ENCODE measurements at regions of chr1 and their contacts with region 1.

Region 1: GRCh38 chr1:55284852-55285251 is 69.7 kb upstream of the USP24 start:
- DNase-seq: no peak
- ATAC-seq: peak; percentile 72 to 86 (median 76)
- H3K4me3 ChIP-seq: no peak overlapping the region
- H3K27ac ChIP-seq: no peak overlapping the region
- H3K4me1 ChIP-seq: no peaks in the 10 kb centered on the region
- H3K27me3 ChIP-seq: no peaks in the 10 kb centered on the region
- CTCF ChIP-seq: peak; percentile 55 to 62 (median 62)
- POLR2A ChIP-seq: no peak

Region 2: DNA sequence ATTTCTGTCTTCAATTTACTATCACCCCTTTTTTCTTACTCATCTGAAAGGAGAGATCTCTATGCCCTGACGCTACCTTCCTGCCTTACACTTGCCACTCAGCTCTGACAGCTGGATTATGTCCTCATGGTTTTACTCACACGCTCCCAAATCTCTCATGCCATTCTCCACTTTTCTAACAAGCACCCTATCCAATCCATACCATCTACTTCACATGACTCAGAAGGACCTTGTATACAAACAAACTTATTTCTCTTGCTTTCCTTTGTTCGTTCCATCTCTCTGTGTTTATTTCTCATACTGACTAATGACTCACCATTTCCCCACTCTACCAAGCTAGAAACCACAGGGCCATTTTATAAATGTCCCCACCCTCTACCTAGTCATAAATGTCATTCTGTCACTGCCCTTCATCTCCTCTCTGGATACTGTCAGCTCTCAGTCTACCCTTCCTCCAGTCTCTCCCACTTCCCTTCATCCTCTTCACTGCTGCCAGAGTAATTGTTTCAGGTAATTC is 157.0 kb before region 1 on chr1:
- intact Hi-C with region 1: no loop called
- DNase-seq: no peak
- ATAC-seq: peak; percentile 12 to 27 (median 16)
- H3K4me3 ChIP-seq: no peak overlapping the region
- H3K27ac ChIP-seq: peak overlapping the region in 1 of 3 donors; percentile 31
- H3K4me1 ChIP-seq: peaks cover 0 to 22% (median 3%) of the 10 kb centered on the region in 4 donors
- H3K27me3 ChIP-seq: no peaks in the 10 kb centered on the region
- CTCF ChIP-seq: no peak
- POLR2A ChIP-seq: no peak

Region 3: DNA sequence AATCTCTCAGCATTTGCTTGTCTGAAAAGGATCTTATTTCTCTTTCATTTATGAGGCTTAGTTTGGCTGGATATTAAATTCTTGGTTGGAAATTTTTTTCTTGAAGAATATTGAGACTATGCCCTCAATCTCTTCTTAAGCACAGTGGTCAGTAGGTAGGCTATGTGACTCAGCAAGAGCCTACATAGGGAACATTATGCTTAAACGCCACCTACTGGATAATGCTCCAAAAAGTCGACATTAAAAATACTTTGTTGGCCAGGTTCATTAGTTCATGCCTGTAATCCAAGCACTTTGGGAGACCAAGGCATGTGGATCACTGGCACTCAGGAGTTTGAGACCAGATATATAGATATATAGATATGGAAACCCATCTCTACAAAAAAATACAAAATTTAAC is 608.3 kb after region 1 on chr1:
- intact Hi-C with region 1: loop called in 1 of 2 experiments (anchors 10 kb)
- DNase-seq: no peak
- ATAC-seq: peak; percentile 87 to 93 (median 88)
- H3K4me3 ChIP-seq: no peak overlapping the region
- H3K27ac ChIP-seq: no peak overlapping the region
- H3K4me1 ChIP-seq: no peaks in the 10 kb centered on the region
- H3K27me3 ChIP-seq: no peaks in the 10 kb centered on the region
- CTCF ChIP-seq: peak; percentile 41 to 55 (median 52)
- POLR2A ChIP-seq: no peak

Measured in right lobe of liver (tissue), 6 donors.